Mammary epithelial cell (primary cell): ENCODE measurements at regions of chr18 and their contacts with region 1.

Region 1: GRCh38 chr18:27656167-27656778 is 471.2 kb upstream of the CHST9 start:
- DNase-seq: peak; percentile 75
- H3K4me3 ChIP-seq: no peak overlapping the region
- H3K27ac ChIP-seq: no peak overlapping the region
- H3K4me1 ChIP-seq: no peaks in the 10 kb centered on the region
- H3K27me3 ChIP-seq: no peaks in the 10 kb centered on the region
- CTCF ChIP-seq: no peak

Region 2: GRCh38 chr18:27695503-27695902 is 39.2 kb after region 1 on chr18:
- CTCF ChIA-PET with region 1: no interaction called
- dilution Hi-C with region 1: no loop called
- in situ Hi-C with region 1: no loop called
- intact Hi-C with region 1: loop called (anchors 1 kb)
- DNase-seq: peak; percentile 34
- H3K4me3 ChIP-seq: no peak overlapping the region
- H3K27ac ChIP-seq: no peak overlapping the region
- H3K4me1 ChIP-seq: no peaks in the 10 kb centered on the region
- H3K27me3 ChIP-seq: peaks cover 2% of the 10 kb centered on the region
- CTCF ChIP-seq: no peak